Posterior vena cava (tissue), 2 donors: ENCODE measurements at regions of chr1 and their contacts with region 1.

Region 1: GRCh38 chr1:42747125-42747524 is 7.1 kb upstream of the CLDN19 start:
- DNase-seq: no peak

Region 2: GRCh38 chr1:42576935-42577334 is 170.2 kb before region 1 on chr1:
- intact Hi-C with region 1: loop called (anchors 10 kb)
- DNase-seq: no peak

Region 3: DNA sequence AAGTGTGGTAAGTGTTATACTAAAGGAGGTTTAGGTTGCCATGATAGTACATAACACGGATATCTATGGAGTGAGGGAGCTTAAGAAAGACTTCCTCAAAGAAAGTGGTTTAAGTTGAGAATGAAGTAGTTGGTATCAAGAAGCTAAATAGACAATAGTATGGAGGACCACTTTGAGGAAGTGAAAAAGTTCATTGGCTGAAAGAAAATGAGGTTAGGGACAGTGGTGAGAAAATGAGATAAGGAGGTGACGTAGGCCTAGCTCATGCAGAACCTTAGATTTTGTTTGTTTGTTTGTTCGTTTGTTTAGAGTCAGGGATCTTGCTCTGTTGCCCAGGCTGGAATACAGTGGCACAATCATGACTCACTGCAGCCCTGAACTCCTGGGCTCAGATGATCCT is 161.1 kb before region 1 on chr1:
- intact Hi-C with region 1: loop called in 1 of 2 experiments (anchors 10 kb)
- DNase-seq: no peak

Region 4: GRCh38 chr1:43327549-43328292 is 580.6 kb after region 1 on chr1:
- intact Hi-C with region 1: no loop called
- DNase-seq: no peak